CD8-positive, alpha-beta T cell (primary cell): ENCODE measurements at regions of chr6 and their contacts with region 1.

Region 1: GRCh38 chr6:159042003-159042825 is 2.6 kb downstream of the TAGAP start:
- DNase-seq: peak; percentile 59 to 96 (median 74)
- ATAC-seq: peak; percentile 50
- H3K4me3 ChIP-seq: peak overlapping the region; percentile 63 to 90
- H3K4me3 Mint-ChIP-seq: peak overlapping the region; percentile 99
- H3K27ac ChIP-seq: peak overlapping the region; percentile 82 to 92
- H3K27ac Mint-ChIP-seq: peak overlapping the region; percentile 95
- H3K4me1 ChIP-seq: peaks cover 58% of the 10 kb centered on the region
- H3K4me1 Mint-ChIP-seq: peaks cover 69% of the 10 kb centered on the region
- H3K27me3 ChIP-seq: no peaks in the 10 kb centered on the region
- H3K27me3 Mint-ChIP-seq: no peaks in the 10 kb centered on the region
- CTCF ChIP-seq: peak; percentile 92

Region 2: DNA sequence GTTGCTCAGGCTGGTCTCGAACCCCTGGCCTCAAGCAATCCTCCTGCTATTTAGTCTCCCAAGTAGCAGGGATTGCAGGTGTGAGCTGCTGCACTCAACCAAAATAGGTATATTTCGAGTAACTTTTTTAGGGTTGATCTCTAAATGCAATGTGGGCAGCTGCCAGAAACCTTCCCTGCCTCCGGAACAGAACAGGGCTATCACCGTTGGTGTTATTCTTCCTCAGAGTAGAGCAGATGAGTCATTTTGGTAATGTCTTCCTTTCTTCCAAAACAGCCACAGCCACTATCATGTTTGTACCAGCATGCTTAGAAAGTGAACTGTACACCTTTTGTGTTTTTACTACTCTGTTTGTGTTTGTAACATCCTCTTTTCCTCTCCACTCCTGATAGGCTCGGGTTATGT is 1175.1 kb before region 1 on chr6:
- CTCF ChIA-PET with region 1: no interaction called
- POLR2A ChIA-PET with region 1: no interaction called
- intact Hi-C with region 1: no loop called
- DNase-seq: peak in 4 of 9 experiments; percentile 26 to 34 (median 27)
- ATAC-seq: peak; percentile 50
- H3K4me3 ChIP-seq: no peak overlapping the region
- H3K4me3 Mint-ChIP-seq: no peak overlapping the region
- H3K27ac ChIP-seq: no peak overlapping the region
- H3K27ac Mint-ChIP-seq: peak overlapping the region; percentile 55
- H3K4me1 ChIP-seq: peaks cover 11% of the 10 kb centered on the region
- H3K4me1 Mint-ChIP-seq: peaks cover 35% of the 10 kb centered on the region
- H3K27me3 ChIP-seq: no peaks in the 10 kb centered on the region
- H3K27me3 Mint-ChIP-seq: no peaks in the 10 kb centered on the region
- CTCF ChIP-seq: no peak

Region 3: DNA sequence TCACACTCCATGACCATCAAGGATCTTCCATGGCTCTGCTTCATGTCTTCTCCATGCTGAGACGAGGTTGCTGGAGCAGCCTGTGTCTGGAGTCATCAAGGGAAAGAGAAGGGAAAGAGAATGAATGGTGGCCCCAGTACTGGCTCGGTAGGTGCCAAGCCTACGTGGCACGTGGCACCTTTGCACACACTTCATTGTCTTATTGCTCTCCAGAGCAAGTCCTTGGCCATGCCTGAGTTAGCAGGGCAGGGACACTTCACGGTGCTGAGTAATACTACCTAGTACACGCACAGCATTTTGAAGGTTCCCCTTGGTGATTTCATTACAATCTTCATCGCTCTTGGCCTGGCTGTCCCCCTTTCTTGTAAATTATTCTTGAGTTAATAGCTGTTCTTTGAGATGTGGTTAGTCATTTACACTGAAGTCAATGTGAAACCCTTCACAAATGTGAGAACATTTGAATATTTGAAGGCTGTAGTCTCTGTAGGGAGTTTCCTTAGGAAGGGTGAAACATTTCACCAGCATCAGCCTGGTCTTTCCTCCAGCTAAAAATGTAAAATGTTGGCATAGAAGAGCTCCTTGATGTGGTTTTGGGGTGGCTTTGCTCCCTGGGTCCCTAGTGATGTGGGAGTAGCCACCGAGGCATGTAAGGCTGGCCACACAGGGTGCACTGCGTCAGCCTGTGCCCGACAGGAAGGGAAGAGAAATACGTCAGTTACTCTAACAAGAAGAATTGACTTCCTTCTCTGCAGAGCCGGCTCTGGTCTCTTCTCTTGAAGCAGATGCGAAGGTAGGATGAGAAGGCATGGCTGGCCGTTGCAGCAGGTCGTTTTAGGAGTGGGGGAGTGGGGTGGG is 392.7 kb before region 1 on chr6 and contains the start of gene SYTL3:
- CTCF ChIA-PET with region 1: no interaction called
- POLR2A ChIA-PET with region 1: no interaction called
- intact Hi-C with region 1: loop called (anchors 1 to 5 kb)
- DNase-seq: peak; percentile 50 to 97 (median 76)
- ATAC-seq: peak; percentile 61
- H3K4me3 ChIP-seq: peak within 1 kb of the TSS in 1 of 2 experiments; percentile 43
- H3K4me3 Mint-ChIP-seq: peak within 1 kb of the TSS; percentile 77
- H3K27ac ChIP-seq: peak within 1 kb of the TSS; percentile 53 to 76
- H3K27ac Mint-ChIP-seq: peak within 1 kb of the TSS; percentile 85
- H3K4me1 ChIP-seq: peaks cover 51% of the 10 kb centered on the region
- H3K4me1 Mint-ChIP-seq: peaks cover 64% of the 10 kb centered on the region
- H3K27me3 ChIP-seq: no peaks in the 10 kb centered on the region
- H3K27me3 Mint-ChIP-seq: no peaks in the 10 kb centered on the region
- CTCF ChIP-seq: no peak
- total RNA-seq, gene SYTL3: 38.2 to 44.6 TPM

Region 4: GRCh38 chr6:158999666-159000403 is 42.4 kb before region 1 on chr6 and contains the start of gene RSPH3:
- CTCF ChIA-PET with region 1: interaction called, 118 read pairs
- POLR2A ChIA-PET with region 1: interaction called, 3 read pairs
- intact Hi-C with region 1: loop called in 1 of 2 experiments (anchors 2 kb)
- DNase-seq: peak; percentile 62 to 93 (median 87)
- ATAC-seq: peak; percentile 85
- H3K4me3 ChIP-seq: peak within 1 kb of the TSS; percentile 91 to 95
- H3K4me3 Mint-ChIP-seq: peak within 1 kb of the TSS; percentile 95
- H3K27ac ChIP-seq: peak within 1 kb of the TSS; percentile 65 to 73
- H3K27ac Mint-ChIP-seq: peak within 1 kb of the TSS; percentile 88
- H3K4me1 ChIP-seq: peaks cover 18% of the 10 kb centered on the region
- H3K4me1 Mint-ChIP-seq: peaks cover 22% of the 10 kb centered on the region
- H3K27me3 ChIP-seq: no peaks in the 10 kb centered on the region
- H3K27me3 Mint-ChIP-seq: no peaks in the 10 kb centered on the region
- CTCF ChIP-seq: no peak
- total RNA-seq, gene RSPH3: 0.52 to 0.83 TPM

Region 5: DNA sequence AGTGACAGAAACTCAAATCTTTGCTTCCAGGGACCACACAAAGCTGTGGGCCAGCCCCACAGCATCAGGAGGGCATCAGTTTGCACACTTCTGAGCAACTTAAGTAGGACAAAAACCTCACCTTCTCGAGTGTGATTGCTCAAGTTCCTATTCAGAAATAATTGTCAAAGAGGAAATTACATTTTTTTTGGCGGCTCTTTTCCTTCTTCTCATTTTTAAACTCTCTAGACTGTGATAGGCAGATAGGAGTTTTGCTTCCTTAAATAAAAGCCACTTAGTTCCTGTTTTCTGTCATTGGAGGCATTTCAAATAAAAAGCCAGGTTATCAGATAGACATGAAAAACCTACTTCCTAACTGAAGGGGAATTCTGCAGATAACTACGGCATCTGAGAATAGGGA is 13.8 kb after region 1 on chr6:
- CTCF ChIA-PET with region 1: interaction called, 37 read pairs
- POLR2A ChIA-PET with region 1: interaction called, 20 read pairs
- intact Hi-C with region 1: loop called in 1 of 2 experiments (anchors 1 kb)
- DNase-seq: no peak
- ATAC-seq: no peak
- H3K4me3 ChIP-seq: no peak overlapping the region
- H3K4me3 Mint-ChIP-seq: peak overlapping the region; percentile 5
- H3K27ac ChIP-seq: no peak overlapping the region
- H3K27ac Mint-ChIP-seq: peak overlapping the region; percentile 82
- H3K4me1 ChIP-seq: peaks cover 40% of the 10 kb centered on the region
- H3K4me1 Mint-ChIP-seq: peaks cover 66% of the 10 kb centered on the region
- H3K27me3 ChIP-seq: no peaks in the 10 kb centered on the region
- H3K27me3 Mint-ChIP-seq: no peaks in the 10 kb centered on the region
- CTCF ChIP-seq: no peak

Region 6: GRCh38 chr6:159098636-159099106 is 56.5 kb after region 1 on chr6:
- CTCF ChIA-PET with region 1: interaction called, 278 read pairs
- POLR2A ChIA-PET with region 1: interaction called, 35 read pairs
- intact Hi-C with region 1: loop called in 1 of 2 experiments (anchors 1 kb)
- DNase-seq: peak; percentile 33 to 94 (median 69)
- ATAC-seq: peak; percentile 79
- H3K4me3 ChIP-seq: peak overlapping the region in 1 of 2 experiments; percentile 25
- H3K4me3 Mint-ChIP-seq: peak overlapping the region; percentile 74
- H3K27ac ChIP-seq: peak overlapping the region; percentile 48 to 85
- H3K27ac Mint-ChIP-seq: peak overlapping the region; percentile 94
- H3K4me1 ChIP-seq: peaks cover 60% of the 10 kb centered on the region
- H3K4me1 Mint-ChIP-seq: peaks cover 69% of the 10 kb centered on the region
- H3K27me3 ChIP-seq: no peaks in the 10 kb centered on the region
- H3K27me3 Mint-ChIP-seq: no peaks in the 10 kb centered on the region
- CTCF ChIP-seq: no peak